MCF 10A (cell line): ENCODE measurements at regions of chr4 and their contacts with region 1.

Region 1: DNA sequence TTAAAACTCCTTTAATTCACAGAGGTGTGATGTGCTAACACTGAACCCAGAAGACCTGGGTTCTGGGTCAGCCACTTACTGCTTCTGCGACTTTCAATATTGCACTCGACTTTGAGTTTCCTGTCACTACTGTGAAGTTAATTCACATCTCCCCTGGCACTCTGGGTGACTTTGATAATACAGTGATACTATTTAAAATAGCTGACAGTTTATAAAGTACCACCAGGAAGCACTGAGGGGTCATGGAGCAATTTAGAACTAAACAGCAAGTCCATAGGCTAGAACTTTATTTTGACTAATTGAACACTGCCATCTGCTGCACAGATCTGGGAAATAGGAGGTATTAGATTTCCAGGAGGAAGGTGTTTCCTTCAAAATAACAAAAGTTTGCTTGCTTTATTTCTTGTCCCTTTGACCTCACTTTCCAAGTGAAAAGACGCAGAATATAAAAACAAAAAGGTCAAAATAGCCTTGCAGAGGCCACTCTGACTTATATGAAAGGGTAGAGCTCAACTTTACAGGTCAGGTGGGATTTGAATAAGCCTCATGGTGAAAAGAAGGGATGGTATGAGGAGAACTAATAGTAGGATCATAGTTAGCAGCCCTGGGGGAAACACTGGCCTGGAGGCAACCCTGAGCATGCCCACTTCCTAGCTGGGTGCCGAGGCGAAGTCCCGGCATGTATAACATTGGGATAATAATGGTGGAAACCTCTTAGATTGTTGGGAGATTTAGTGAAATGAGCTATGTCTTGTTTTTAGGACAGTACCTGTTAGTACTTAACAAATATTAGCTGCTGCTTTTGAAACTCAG is 53.4 kb downstream of the ZNF518B start:
- DNase-seq: peak; percentile 55
- H3K4me3 Mint-ChIP-seq: no peak overlapping the region
- H3K27ac Mint-ChIP-seq: no peak overlapping the region
- H3K4me1 Mint-ChIP-seq: peaks cover 4% of the 10 kb centered on the region
- H3K27me3 Mint-ChIP-seq: no peaks in the 10 kb centered on the region
- CTCF ChIP-seq: peak; percentile 36

Region 2: DNA sequence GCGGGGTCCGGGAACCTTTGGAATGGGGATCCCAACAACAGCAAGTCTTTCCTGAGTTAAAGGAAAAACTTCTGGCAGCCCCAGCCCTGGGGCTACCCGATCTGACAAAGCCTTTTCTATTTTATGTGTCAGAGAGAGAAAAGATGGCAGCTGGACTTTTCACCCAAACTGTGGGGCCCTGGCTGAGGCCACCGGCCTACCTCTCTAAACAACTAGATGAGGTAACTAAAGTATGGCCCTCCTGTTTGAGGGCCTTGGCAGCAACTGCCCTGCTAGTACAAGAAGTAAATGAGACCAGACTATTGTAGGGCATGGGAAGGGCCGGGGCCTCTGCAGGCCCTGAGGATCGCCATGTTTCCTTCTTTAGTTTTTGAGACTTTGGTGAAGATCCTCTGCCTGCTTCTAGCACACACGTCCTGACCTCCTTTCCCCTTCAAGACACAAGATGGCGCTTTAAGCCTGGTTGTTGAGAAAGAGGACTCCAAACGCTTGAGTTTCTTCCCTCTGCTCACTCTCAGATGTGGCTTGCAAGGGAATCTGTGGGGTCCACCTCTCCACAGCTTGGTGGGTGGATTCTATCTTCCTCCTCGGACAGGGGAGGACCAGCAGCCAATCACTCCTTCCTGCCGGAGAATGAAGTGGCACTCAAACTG is 640.9 kb before region 1 on chr4:
- CTCF ChIA-PET with region 1: interaction called, 3 read pairs
- POLR2A ChIA-PET with region 1: no interaction called
- intact Hi-C with region 1: loop called (anchors 5 kb)
- DNase-seq: peak; percentile 81
- H3K4me3 Mint-ChIP-seq: no peak overlapping the region
- H3K27ac Mint-ChIP-seq: no peak overlapping the region
- H3K4me1 Mint-ChIP-seq: peaks cover 5% of the 10 kb centered on the region
- H3K27me3 Mint-ChIP-seq: peaks cover 28% of the 10 kb centered on the region
- CTCF ChIP-seq: peak; percentile 74

Region 3: DNA sequence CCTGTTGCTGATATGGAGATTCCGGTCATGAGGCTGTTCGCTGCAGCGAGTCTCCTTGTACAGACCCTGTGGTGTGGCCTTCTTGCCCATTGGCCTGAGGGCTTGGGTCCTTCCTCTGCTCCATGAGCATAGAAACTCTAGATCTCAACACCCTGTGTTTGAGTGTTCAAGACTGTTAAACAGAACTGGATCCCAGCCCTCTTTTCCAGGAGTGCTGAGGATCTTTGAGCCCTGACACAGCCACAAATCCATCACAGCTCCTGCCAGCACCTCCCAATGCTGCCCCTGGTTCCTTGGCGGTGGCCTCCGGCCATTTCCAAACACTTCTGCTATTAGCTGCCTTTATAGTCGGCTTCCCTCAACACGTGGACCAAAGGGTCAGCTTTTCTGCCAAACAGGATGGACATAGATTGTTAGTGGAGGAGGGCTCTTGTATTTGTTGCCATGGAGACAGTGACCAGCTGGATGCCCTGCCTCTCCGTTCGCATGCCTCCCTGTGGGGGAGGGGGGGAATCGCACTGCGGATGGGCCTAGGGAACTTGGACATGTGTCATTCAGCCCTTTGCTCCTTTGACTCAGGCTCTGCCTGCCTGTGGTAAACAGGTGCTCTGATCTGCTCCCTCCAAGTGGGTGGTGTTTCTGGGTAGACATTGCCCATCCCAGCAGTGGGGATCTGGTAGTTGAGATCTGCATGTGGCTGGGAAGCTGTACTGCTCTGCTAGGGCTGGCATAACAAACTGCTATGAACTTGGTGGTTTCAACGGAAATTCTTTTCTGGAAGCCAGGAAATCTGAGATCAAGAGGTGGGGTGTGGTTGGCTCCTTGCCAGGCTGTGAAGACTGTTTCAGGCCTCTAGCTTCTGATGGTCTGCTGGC is 280.4 kb before region 1 on chr4:
- CTCF ChIA-PET with region 1: interaction called, 11 read pairs
- POLR2A ChIA-PET with region 1: no interaction called
- intact Hi-C with region 1: no loop called
- DNase-seq: no peak
- H3K4me3 Mint-ChIP-seq: no peak overlapping the region
- H3K27ac Mint-ChIP-seq: no peak overlapping the region
- H3K4me1 Mint-ChIP-seq: peaks cover 4% of the 10 kb centered on the region
- H3K27me3 Mint-ChIP-seq: no peaks in the 10 kb centered on the region
- CTCF ChIP-seq: no peak

Region 4: DNA sequence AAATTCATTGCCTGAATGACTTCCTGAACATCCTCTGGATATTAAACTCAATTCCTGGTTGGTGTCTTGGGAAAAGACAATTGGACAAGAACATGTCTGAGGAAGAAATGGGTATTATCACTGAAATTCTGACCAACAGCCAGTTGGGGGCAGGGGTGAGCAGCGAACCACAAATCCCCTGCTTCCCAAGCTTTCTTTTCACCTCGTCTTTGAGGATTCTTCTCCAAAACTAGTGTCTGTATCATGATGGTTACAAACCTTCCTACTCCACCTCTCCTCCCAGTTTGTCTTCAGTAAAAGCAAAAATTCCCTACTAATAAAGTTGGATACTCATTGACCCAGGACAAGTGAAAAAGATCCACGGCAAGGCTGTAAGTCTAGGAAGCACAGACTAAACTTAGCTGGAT is 239.0 kb before region 1 on chr4:
- CTCF ChIA-PET with region 1: interaction called, 454 read pairs
- POLR2A ChIA-PET with region 1: interaction called, 8 read pairs
- intact Hi-C with region 1: loop called (anchors 1 kb)
- DNase-seq: peak; percentile 63
- H3K4me3 Mint-ChIP-seq: no peak overlapping the region
- H3K27ac Mint-ChIP-seq: no peak overlapping the region
- H3K4me1 Mint-ChIP-seq: peaks cover 6% of the 10 kb centered on the region
- H3K27me3 Mint-ChIP-seq: no peaks in the 10 kb centered on the region
- CTCF ChIP-seq: peak; percentile 54

Region 5: DNA sequence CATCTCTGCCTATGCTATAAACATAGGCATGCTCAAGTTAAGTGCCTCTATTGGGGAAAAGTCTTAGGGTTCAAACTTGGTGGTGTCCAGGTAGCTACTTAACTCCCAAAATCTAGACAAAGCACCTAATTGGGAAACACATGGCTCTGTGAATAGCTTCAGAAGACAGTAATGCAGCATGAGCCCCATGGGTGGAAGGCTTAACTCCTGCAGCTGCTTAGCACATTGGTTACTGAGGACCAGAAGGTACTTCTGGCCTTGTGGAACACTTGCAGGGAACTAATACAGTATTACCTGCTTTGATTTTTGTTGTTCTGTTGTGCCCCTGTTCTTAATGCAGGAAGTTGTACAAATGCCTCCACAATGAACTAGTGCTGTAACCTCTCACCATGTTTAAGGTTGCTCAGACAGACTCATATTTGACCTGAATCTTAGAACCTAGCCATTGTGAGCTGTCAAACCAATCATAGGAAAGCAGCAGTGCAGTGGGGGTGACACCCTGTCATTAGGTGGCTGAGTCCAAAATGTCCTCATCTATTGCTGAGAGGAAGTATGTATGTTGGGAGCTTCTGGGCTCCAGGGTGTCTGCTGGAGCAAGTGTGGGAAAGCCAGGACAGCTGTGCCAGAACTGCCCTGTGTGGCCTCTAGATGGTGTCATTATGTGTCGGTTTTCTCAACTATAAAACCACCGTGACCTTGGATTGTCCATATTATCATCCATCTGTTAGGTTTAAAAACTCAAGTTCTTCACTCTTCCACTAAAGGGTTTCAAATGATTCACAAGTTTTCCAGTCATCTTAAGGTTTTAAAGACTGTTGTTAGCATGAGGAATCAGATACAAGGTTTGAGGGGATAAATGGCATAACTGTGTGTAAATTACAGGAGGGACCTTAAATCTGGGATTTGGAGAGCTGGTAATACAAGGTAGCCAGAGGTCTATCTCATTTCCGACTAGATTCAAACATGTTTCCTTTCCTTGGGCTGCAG is 217.3 kb before region 1 on chr4:
- CTCF ChIA-PET with region 1: interaction called, 25 read pairs
- POLR2A ChIA-PET with region 1: no interaction called
- intact Hi-C with region 1: no loop called
- DNase-seq: peak; percentile 23
- H3K4me3 Mint-ChIP-seq: no peak overlapping the region
- H3K27ac Mint-ChIP-seq: no peak overlapping the region
- H3K4me1 Mint-ChIP-seq: no peaks in the 10 kb centered on the region
- H3K27me3 Mint-ChIP-seq: no peaks in the 10 kb centered on the region
- CTCF ChIP-seq: no peak

Region 6: DNA sequence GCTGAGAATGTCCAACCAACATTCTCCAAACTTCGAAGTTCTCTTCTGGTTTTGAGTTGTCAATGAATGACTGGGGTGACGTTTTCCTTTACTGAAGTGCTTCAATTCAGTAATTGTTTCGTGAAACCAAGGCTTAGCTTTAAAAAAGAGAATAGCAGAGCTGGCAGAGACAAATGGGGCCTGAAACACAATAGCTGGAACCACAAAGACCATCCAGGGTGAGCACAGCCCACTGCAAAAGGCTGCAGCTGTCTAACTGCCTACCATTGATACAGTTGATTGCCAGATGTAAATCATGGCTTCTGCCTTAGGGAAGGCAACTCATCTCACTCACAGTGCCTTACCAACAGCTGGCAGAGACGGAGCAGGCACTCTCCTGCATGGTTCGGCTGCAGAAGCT is 132.1 kb after region 1 on chr4:
- CTCF ChIA-PET with region 1: interaction called, 16 read pairs
- POLR2A ChIA-PET with region 1: no interaction called
- intact Hi-C with region 1: no loop called
- DNase-seq: no peak
- H3K4me3 Mint-ChIP-seq: no peak overlapping the region
- H3K27ac Mint-ChIP-seq: no peak overlapping the region
- H3K4me1 Mint-ChIP-seq: peaks cover 2% of the 10 kb centered on the region
- H3K27me3 Mint-ChIP-seq: no peaks in the 10 kb centered on the region
- CTCF ChIP-seq: no peak